Activated T-helper 1 cell treated with anti-CD3 and anti-CD28 coated beads, Interleukin-12 subunit alpha, Interleukin-12 subunit beta, Interleukin-2, Interleukin-4 antibody, amounts not matched to agents 30 ng/mL and 10 ng/mL and 1 ng/mL, durations not matched to agents 14 hours and 24 hours and 36 hours (primary cell): ENCODE measurements at regions of chr4 and their contacts with region 1.

Region 1: DNA sequence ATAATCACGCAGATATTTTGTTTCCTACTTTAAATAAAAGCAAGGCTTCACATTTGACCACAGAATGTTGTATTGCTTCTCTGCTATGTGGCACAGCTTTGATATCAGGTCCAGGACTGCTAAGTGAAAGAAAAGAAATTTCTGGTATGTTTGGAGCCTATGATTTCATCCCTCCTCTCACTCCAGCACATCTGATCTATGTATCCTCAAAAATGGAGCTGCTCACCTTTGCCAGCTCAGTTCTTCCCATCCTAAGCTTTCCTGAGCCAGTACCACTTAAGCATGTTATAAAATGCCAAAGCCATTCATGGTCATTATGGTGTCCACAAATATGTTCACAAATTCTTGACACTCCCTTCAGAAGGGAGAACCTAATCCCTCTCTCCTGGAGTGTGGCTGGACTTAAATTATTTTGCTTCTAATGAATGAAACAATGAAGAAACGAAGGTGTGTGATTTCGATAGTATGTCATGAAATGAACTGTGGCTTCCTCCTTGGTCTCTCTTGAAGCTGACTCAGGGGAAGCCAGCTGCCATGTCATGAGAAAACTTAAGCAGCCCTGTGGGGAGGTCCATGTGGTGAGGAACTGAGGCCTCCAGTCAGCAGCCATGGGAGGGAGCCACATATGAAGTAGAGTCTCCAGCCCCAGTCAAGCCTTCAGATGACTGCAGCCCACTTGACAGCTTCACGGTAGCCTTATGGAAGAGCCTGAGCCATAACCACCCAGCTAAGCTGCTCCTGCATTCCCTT is 207.7 kb downstream of the MGST2 start:
- DNase-seq: no peak
- H3K4me3 Mint-ChIP-seq: no peak overlapping the region
- H3K27ac Mint-ChIP-seq: no peak overlapping the region
- H3K4me1 Mint-ChIP-seq: peaks cover 12% of the 10 kb centered on the region
- H3K27me3 Mint-ChIP-seq: no peaks in the 10 kb centered on the region

Region 2: GRCh38 chr4:139890816-139891215 is 17.5 kb after region 1 on chr4:
- intact Hi-C with region 1: loop called (anchors 1 kb)
- DNase-seq: no peak
- H3K4me3 Mint-ChIP-seq: no peak overlapping the region
- H3K27ac Mint-ChIP-seq: no peak overlapping the region
- H3K4me1 Mint-ChIP-seq: no peaks in the 10 kb centered on the region
- H3K27me3 Mint-ChIP-seq: peaks cover 9% of the 10 kb centered on the region